Activated CD4-positive, alpha-beta T cell treated with anti-CD3 and anti-CD28 coated beads, Interleukin-2, amount 10 ng/mL, durations not matched to agents 24 days and 14 days (primary cell): ENCODE measurements at regions of chr1 and their contacts with region 1.

Region 1: DNA sequence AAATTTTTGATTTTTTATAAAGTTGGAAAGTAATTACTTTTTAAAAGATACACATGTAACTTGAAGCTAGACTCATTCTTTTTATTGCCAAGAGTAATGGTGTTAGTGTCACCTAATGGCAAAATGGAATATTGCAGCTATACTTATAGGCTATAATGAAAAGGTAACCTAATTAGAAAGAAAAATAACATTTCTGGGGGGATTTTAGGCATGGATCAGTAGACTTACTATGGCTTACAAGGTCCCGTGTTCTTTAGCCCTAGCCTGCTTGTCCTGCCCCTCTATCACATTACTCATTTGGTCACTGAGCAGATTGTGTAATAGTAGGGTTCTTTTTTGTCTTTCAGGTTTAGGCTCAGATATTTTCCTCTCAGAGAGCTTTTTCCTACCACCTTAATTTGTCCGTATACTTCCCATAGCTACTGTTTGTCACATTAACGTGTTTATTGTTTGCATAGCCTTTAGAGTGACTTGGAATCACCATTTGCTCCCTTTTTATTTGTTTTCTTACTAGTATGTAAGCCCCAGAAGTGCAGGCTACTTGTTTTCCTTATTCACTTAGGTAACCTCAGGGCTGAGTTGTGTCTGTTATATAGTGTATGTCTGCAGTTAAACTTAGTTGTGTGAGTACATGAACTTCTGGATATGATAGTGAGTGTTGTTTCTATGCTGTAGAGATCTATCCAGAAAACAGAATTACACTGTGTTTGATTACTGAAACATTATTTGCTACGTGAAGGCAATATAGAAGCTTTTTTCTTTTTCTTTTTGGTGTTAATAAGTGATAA is 58.7 kb downstream of the RABGAP1L start:
- DNase-seq: peak; percentile 57
- H3K4me3 Mint-ChIP-seq: no peak overlapping the region
- H3K27ac Mint-ChIP-seq: no peak overlapping the region
- H3K4me1 Mint-ChIP-seq: no peaks in the 10 kb centered on the region
- H3K27me3 Mint-ChIP-seq: no peaks in the 10 kb centered on the region

Region 2: DNA sequence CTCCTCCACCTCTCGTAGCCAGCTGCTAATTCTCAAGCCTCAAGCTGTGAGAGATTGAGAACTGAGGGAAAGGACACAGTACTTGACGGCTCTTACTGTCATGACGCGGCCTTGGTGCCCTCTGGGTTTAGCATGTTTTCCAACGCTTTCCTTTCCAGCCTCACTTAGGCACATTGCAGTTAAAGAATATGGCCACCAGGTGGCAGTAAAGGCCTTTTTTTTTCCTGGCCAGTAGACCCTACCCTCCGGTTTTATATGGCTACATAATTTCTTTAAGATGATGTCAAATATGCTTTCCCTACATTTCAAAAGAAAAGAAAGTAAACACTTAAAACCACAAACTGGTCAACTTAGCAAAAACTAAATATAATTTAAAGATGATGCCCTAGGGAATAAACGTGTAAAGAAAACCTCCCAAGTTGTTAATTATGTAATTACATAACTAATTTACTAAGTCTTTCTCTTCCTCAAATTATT is 797.6 kb before region 1 on chr1:
- intact Hi-C with region 1: loop called (anchors 5 kb)
- DNase-seq: peak; percentile 89
- H3K4me3 Mint-ChIP-seq: no peak overlapping the region
- H3K27ac Mint-ChIP-seq: no peak overlapping the region
- H3K4me1 Mint-ChIP-seq: peaks cover 7% of the 10 kb centered on the region
- H3K27me3 Mint-ChIP-seq: no peaks in the 10 kb centered on the region

Region 3: GRCh38 chr1:173798078-173798477 is 419.9 kb before region 1 on chr1:
- intact Hi-C with region 1: no loop called
- DNase-seq: no peak
- H3K4me3 Mint-ChIP-seq: no peak overlapping the region
- H3K27ac Mint-ChIP-seq: no peak overlapping the region
- H3K4me1 Mint-ChIP-seq: no peaks in the 10 kb centered on the region
- H3K27me3 Mint-ChIP-seq: no peaks in the 10 kb centered on the region

Region 4: GRCh38 chr1:174031099-174031498 is 186.9 kb before region 1 on chr1:
- intact Hi-C with region 1: no loop called
- DNase-seq: no peak
- H3K4me3 Mint-ChIP-seq: no peak overlapping the region
- H3K27ac Mint-ChIP-seq: no peak overlapping the region
- H3K4me1 Mint-ChIP-seq: no peaks in the 10 kb centered on the region
- H3K27me3 Mint-ChIP-seq: peaks cover 22% of the 10 kb centered on the region